Adrenal gland (tissue), 19 donors: ENCODE measurements at regions of chr3 and their contacts with region 1.

Region 1: GRCh38 chr3:14402304-14402811 is at the start of gene SLC6A6:
- DNase-seq: peak; percentile 95 to 99 (median 97)
- H3K4me3 ChIP-seq: peak within 1 kb of the TSS; percentile 38 to 69 (median 52)
- H3K27ac ChIP-seq: peak within 1 kb of the TSS; percentile 75 to 96 (median 91)
- H3K4me1 ChIP-seq: peaks cover 30 to 42% of the 10 kb centered on the region in 2 donors
- H3K27me3 ChIP-seq: no peaks in the 10 kb centered on the region
- CTCF ChIP-seq: peak in 5 of 6 experiments; percentile 42 to 72 (median 60)
- POLR2A ChIP-seq: peak; percentile 79 to 95
- total RNA-seq, gene SLC6A6: 35.8 to 197 (median 89.4) TPM

Region 2: GRCh38 chr3:14452679-14453367 is 50.5 kb after region 1 on chr3:
- intact Hi-C with region 1: loop called in 1 of 2 experiments (anchors 5 kb)
- DNase-seq: peak; percentile 74 to 94 (median 92)
- H3K4me3 ChIP-seq: peak overlapping the region in 1 of 4 donors; percentile 9
- H3K27ac ChIP-seq: peak overlapping the region; percentile 82 to 97 (median 90)
- H3K4me1 ChIP-seq: peaks cover 39 to 42% of the 10 kb centered on the region in 2 donors
- H3K27me3 ChIP-seq: no peaks in the 10 kb centered on the region
- CTCF ChIP-seq: peak in 5 of 6 experiments; percentile 23 to 48 (median 36)
- POLR2A ChIP-seq: peak in 1 of 2 donors; percentile 78

Region 3: DNA sequence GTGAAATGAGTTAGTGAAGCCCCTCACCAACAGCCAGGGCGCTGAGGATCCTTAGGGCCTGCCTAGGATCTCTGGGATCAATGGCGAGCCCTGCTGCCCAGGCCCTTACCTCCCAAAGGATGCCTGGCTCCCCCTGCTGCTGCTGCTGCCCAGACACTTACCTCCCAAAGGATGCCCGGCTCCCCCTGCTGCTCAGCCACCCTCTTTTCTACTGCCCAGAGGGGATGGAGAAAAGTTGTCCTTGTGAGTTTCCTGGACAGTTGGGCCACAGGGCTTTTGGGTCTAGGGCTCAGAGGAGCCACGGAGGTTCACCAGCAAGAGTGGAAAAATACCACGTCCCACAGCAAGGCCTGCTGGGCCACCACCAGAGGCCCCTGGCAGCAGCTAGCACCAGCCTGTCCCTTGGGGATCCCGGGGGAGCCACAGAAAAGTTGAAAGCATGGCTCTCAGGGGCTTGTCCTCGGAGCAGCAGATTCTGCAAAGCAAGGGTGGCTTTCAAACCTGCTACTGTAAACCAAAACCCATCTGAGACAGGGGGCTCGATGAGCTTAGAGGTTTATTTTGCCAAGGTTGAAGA is 59.5 kb after region 1 on chr3:
- intact Hi-C with region 1: loop called (anchors 5 kb)
- DNase-seq: peak in 6 of 7 donors; percentile 48 to 69 (median 54)
- H3K4me3 ChIP-seq: no peak overlapping the region
- H3K27ac ChIP-seq: peak overlapping the region in 1 of 5 donors; percentile 48
- H3K4me1 ChIP-seq: peaks cover 8 to 17% of the 10 kb centered on the region in 2 donors
- H3K27me3 ChIP-seq: no peaks in the 10 kb centered on the region
- CTCF ChIP-seq: peak in 5 of 6 experiments; percentile 33 to 58 (median 55)
- POLR2A ChIP-seq: no peak

Region 4: DNA sequence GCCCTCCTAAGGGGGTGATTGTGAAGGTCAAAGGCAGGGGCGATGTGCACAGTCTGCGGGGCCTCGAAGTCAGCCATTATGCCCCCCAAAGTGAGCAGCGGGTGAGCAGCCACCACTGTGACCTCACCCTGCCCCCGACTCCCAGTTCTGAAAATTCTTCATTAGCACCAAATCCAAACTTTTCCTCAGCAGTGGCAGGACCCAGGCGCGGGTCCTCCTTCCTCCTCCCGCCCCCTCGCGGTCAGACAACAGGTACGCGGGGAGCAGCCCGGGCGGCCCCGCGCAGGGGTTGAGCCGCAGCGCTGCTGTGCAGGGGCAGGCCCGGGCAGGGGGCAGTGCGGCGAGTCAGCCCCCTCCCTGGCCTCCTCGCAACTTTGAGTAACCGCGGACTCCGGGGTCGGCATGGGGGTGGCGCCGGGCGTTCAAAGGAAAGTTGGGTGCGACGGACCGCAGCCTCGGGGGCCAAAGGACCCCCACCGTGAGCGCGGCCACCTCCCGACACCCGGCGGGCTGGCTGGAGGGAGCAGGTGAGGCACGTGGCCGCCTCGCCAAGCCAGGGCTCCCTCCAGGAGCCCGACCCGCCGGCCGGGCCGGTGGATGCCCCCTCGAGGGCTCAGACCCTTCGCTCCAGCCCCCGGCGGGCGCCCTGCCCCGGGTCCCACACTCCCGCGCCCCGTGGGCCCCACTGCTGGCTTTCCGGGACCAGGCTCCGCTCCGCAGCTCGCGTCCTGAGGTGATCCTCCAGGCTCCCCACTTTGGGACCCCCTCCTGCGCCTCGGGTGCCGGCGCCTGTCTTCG is 199.8 kb after region 1 on chr3:
- intact Hi-C with region 1: no loop called
- DNase-seq: no peak
- H3K4me3 ChIP-seq: peak overlapping the region in 1 of 4 donors; percentile 40
- H3K27ac ChIP-seq: no peak overlapping the region
- H3K4me1 ChIP-seq: peaks cover 0 to 5% of the 10 kb centered on the region in 2 donors
- H3K27me3 ChIP-seq: peaks cover 24% of the 10 kb centered on the region
- CTCF ChIP-seq: peak in 1 of 6 experiments; percentile 4
- POLR2A ChIP-seq: no peak